ENCODE measurements at regions of chr10 and their contacts with region 1.

Region 1: DNA sequence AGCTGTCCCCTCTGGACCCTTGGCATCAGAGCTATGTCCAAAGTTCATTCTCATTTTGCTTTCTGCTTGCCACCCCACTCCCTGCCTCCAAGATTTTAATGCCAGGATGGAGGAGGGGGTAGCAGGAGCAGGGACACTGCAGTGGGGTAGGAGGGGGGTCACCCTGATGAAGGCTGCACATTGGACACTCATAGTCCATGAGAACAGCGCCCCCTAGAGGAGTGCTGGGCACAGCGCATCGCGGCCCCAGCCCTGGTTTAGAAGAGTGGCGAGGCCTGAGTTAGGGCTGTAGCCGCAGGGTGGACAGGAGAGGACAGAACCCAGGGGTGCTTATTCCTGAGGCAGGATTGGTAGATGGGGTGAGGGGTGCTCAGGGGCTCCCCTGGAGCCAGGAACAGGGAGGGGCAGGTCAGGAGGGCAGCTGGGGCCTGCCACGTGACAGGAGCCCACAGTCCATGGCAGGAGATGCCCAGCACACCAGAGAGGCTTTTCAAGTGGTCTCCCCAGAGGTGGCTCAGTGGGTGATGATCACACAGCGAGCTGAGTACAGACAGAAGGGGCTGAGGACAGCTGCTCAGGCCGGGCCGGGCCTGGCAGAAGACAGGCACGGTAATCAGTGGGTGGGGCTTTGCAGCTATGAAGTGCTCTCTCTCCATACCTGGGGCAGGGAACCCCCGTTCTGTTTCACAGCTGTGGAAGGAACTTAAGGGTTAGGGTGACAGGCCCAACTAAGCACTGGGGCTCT is 71.4 kb downstream of the NEURL1 start:
- DNase-seq: peak; percentile 66
- CTCF ChIP-seq: peak; percentile 75

Region 2: GRCh38 chr10:103053659-103054581 is 511.0 kb before region 1 on chr10:
- CTCF ChIA-PET with region 1: no interaction called
- POLR2A ChIA-PET with region 1: no interaction called
- DNase-seq: peak; percentile 72
- CTCF ChIP-seq: peak; percentile 47

Region 3: GRCh38 chr10:103333925-103334520 is 230.9 kb before region 1 on chr10:
- CTCF ChIA-PET with region 1: no interaction called
- POLR2A ChIA-PET with region 1: no interaction called
- DNase-seq: peak; percentile 35
- CTCF ChIP-seq: peak; percentile 54

Region 4: DNA sequence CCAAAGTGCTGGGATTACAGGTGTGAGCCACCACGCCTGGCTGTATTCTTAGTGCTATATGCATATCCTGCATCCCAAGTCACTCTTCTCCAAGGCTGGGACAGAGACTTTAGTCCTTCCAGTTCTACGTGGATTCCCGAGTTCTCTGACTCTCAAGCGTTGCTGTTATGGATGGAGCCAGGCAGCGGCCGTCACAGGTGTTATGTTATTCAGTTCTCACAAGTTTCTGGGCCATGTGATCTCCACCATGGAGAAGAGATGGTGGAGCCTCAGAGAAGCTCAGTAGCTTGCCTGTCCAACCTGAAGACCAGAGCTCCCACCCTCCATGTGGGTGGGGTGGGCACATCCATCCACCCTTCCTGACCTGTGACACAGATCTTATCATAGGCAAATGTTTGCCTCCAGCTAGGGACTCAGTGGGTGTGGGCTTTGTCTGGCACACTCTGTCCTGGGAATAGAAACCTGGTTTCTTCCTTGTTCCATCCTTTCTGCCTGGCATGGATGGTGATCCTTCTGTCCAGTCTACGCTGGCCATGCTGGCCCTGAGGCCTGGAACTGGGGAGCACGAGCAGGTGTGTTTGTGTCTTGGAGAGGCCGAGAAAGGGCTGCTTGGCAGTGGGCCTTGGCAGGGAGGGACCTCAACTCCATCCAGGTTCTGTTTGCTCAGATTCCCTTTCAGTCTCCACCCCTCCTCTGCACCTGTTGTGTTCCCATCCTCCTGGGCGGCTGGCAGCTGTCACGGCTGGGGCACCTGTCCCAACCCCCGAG is 16.2 kb before region 1 on chr10:
- CTCF ChIA-PET with region 1: interaction called, 26 read pairs
- POLR2A ChIA-PET with region 1: no interaction called
- DNase-seq: no peak
- CTCF ChIP-seq: no peak

Region 5: DNA sequence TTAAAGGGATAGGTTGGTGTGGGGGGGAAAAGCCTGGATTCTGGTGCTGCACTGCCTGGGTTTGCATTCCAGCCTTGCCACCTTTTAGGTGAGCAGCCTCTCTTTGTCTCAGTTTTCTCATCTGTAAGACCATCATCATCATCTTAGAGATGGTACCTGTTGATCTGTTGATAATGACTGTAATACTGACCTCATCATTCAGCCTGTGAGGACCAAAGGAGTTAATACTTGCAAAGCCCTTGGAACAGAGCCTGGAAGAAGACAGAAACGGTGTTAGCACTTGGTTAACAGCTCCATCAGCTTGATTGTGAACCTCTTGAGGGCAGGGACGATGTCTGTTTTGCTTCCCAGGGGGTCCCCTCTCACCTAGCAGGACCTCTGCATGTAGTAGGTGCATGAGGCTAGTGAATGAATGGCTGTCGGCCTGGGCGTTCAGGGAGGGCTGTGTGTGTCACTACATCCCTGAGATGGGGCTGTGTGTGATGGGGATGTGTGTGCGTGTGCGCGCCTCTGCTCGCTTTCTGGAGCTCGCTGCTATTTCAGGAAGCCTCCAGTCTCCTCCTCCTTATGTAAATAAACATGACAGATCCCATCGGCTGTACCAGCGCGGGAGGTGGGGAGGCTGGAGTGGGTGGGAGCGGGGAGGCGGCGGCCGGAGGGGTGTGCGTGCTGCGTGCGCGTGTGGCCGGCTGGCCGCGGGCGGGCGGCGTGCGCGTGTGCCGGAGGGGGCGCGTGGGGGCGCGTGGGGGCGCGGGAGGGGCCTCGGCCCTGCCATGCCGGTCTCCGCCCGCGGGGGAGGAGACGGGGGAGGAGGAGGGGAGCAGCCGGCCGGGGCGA is 10.2 kb before region 1 on chr10:
- CTCF ChIA-PET with region 1: interaction called, 20 read pairs
- POLR2A ChIA-PET with region 1: no interaction called
- DNase-seq: peak; percentile 42
- CTCF ChIP-seq: no peak

Region 6: DNA sequence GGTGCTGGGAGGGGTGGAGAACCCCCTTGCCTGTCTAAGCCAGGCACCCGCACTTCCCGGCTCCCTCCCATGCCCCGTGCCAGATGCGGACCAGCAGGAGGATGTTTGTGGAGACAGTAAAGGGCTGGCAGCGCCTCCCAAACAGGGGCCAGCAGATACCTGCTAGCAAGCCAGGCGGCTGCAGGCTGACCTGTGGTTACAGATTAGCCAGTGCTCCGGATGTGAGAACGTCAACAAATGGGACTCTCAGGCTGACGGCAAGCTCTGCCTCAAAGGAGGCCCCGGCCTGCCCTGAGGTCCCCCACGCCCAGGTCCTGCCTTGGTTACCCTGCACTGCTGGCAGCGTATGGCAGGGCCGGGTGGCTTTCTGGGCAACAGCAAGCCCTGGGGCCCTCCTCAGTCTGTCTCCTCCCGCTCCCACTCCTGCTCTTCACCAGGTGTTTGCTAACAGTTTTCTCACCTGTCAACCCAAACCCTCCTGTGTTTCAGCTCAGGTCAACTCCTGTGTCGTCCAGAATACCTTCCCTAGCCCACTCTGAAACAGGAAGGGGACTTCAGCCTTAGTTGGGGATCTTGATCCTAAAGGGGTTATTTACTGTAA is 13.9 kb after region 1 on chr10:
- CTCF ChIA-PET with region 1: interaction called, 13 read pairs
- POLR2A ChIA-PET with region 1: no interaction called
- DNase-seq: peak; percentile 73
- CTCF ChIP-seq: no peak

Region 7: GRCh38 chr10:103592186-103593021 is 27.5 kb after region 1 on chr10:
- CTCF ChIA-PET with region 1: interaction called, 18 read pairs
- POLR2A ChIA-PET with region 1: no interaction called
- DNase-seq: peak; percentile 86
- CTCF ChIP-seq: peak; percentile 85